ENCODE measurements at regions of chr18 and their contacts with region 1.

Region 1: DNA sequence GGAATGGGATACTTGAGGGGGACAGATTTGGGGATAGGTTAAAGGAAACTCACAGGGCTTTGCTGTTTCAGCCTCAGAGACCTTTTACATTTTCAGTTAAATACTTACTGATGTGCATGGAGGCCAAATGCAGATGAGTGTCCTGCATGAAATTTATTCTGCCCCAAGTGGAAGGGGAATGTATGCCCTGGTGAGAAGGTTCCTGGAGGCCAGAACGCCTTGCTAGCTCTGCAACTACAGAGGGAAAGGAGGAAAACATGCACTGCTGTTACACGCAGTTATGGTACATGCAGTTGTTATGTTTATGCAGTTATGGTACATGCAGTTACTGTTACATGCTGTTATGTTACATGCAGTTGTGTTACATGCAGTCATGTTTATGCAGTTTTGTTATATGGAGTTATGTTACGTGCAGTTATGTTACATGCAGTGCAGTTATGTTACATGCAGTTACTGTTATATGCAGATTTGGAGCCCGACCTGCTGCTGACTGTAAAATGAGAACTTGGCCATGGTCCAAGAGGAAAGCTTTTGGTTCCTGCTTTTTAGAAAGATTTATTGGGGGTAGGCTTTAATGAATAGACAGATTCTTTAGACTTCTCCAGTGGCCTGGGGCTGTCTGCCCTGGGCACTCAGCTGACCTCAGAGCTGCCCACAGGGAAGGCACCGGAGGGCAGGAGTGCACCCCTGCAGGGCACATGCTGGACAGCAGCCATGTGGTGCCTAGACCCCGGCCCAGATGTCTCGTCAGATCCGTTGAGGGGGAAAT is 84.1 kb downstream of the LDLRAD4 start:
- DNase-seq: peak in 1 of 2 donors; percentile 32
- ATAC-seq: peak in 3 of 8 donors; percentile 11 to 20 (median 20)
- H3K4me3 ChIP-seq: no peak overlapping the region
- H3K27ac ChIP-seq: peak overlapping the region in 3 of 10 donors; percentile 0 to 41 (median 8)
- H3K4me1 ChIP-seq: peaks cover 23 to 66% (median 43%) of the 10 kb centered on the region in 9 donors
- H3K27me3 ChIP-seq: no peaks in the 10 kb centered on the region
- CTCF ChIP-seq: no peak

Region 2: GRCh38 chr18:13260197-13260934 is 42.3 kb before region 1 on chr18:
- intact Hi-C with region 1: no loop called
- DNase-seq: no peak
- ATAC-seq: peak; percentile 14 to 62 (median 24)
- H3K4me3 ChIP-seq: no peak overlapping the region
- H3K27ac ChIP-seq: peak overlapping the region in 6 of 10 donors; percentile 20 to 73 (median 47)
- H3K4me1 ChIP-seq: peaks cover 27 to 60% (median 51%) of the 10 kb centered on the region in 9 donors
- H3K27me3 ChIP-seq: no peaks in the 10 kb centered on the region
- CTCF ChIP-seq: no peak

Region 3: GRCh38 chr18:13375302-13376255 is 72.9 kb after region 1 on chr18:
- intact Hi-C with region 1: loop called in 1 of 10 experiments (anchors 10 kb)
- DNase-seq: peak; percentile 59 to 76
- ATAC-seq: peak; percentile 51 to 89 (median 78)
- H3K4me3 ChIP-seq: no peak overlapping the region
- H3K27ac ChIP-seq: peak overlapping the region in 8 of 10 donors; percentile 3 to 75 (median 64)
- H3K4me1 ChIP-seq: peaks cover 11 to 78% (median 56%) of the 10 kb centered on the region in 9 donors
- H3K27me3 ChIP-seq: no peaks in the 10 kb centered on the region
- CTCF ChIP-seq: peak in 1 of 9 donors; percentile 30

Region 4: DNA sequence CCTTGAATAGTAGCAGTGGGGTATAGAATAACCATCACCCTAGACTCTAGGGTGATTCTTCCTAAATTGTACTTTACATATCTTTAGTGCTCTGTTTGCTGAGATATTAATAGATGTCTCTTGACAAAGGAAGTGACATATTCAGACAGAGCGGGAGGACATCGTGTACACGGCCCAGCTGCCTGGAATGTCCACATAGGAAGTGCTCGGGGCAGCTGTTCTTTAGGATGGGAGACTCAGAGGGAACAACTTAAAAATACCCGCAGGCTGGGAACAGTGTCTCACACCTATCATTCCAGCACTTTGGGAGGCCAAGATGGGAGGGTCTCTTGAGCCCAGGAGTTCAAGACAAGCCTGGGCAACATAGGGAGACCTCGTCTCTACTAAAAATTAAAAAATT is 217.7 kb after region 1 on chr18:
- intact Hi-C with region 1: loop called in 1 of 10 experiments (anchors 10 kb)
- DNase-seq: peak in 1 of 2 donors; percentile 45
- ATAC-seq: peak in 7 of 8 donors; percentile 65 to 98 (median 86)
- H3K4me3 ChIP-seq: no peak overlapping the region
- H3K27ac ChIP-seq: peak overlapping the region in 8 of 10 donors; percentile 14 to 78 (median 54)
- H3K4me1 ChIP-seq: peaks cover 0 to 32% (median 22%) of the 10 kb centered on the region in 9 donors
- H3K27me3 ChIP-seq: no peaks in the 10 kb centered on the region
- CTCF ChIP-seq: no peak

Measured in heart right ventricle (tissue), 16 donors.